AG04450 (cell line): ENCODE measurements at regions of chr7 and their contacts with region 1.

Region 1: GRCh38 chr7:75914730-75915585 is at the start of gene POR:
- DNase-seq: peak; percentile 69
- H3K4me3 ChIP-seq: peak within 1 kb of the TSS; percentile 87
- H3K27ac ChIP-seq: peak within 1 kb of the TSS; percentile 68
- H3K27me3 ChIP-seq: no peaks in the 10 kb centered on the region
- CTCF ChIP-seq: no peak
- polyA plus RNA-seq, gene POR: 39.0 and 46.5 TPM in 2 replicates

Region 2: GRCh38 chr7:75854233-75854632 is 60.7 kb before region 1 on chr7:
- CTCF ChIA-PET with region 1: no interaction called
- POLR2A ChIA-PET with region 1: interaction called, 15 read pairs
- DNase-seq: no peak
- H3K4me3 ChIP-seq: no peak overlapping the region
- H3K27ac ChIP-seq: no peak overlapping the region
- H3K27me3 ChIP-seq: no peaks in the 10 kb centered on the region
- CTCF ChIP-seq: no peak

Region 3: GRCh38 chr7:75889826-75890225 is 25.1 kb before region 1 on chr7:
- CTCF ChIA-PET with region 1: no interaction called
- POLR2A ChIA-PET with region 1: interaction called, 12 read pairs
- DNase-seq: no peak
- H3K4me3 ChIP-seq: no peak overlapping the region
- H3K27ac ChIP-seq: no peak overlapping the region
- H3K27me3 ChIP-seq: no peaks in the 10 kb centered on the region
- CTCF ChIP-seq: no peak

Region 4: DNA sequence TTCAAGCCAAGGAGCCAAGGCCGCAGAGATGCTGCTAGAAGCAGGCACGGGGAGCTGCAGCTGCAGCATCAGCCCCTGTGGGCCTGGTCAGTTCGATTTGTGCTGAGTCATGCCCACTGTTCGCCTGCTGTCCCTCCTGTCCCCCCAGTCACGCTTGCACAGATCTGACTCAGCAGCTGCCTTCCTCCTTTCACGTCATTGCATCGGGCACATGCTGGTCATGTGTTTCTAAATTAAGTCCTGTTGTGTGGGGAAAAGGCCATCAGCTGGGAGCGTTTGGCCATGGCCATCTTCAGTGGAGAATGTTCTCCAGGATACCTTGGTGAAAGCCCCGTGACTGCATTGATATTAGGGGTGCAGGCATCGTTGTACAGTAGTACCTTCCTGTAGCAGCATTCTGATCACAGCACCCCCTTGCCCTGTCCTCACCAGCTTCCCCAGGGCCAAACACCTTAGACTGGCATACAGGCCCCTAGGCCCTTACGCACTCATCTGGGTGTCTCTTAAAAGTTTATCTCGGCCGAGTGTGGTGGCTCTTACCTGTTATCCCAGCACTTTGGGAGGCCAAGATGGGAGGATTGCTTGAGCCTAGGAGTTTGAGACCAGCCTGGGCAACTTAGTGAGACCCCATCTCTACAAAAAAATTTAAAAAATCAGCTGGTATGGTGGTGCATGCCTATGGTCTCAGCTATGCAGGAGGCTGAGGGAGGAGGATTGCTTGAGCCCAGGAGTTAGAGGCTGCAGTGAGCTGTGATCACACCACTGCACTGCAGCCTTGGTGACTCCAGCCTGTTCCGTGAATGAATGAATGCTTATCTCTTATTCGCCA is 23.2 kb after region 1 on chr7:
- CTCF ChIA-PET with region 1: no interaction called
- POLR2A ChIA-PET with region 1: interaction called, 11 read pairs
- DNase-seq: peak; percentile 75
- H3K4me3 ChIP-seq: no peak overlapping the region
- H3K27ac ChIP-seq: peak overlapping the region; percentile 78
- H3K27me3 ChIP-seq: no peaks in the 10 kb centered on the region
- CTCF ChIP-seq: no peak